HepG2 (cell line): ENCODE measurements at regions of chr11 and their contacts with region 1.

Region 1: GRCh38 chr11:10808553-10809372 is at the start of gene EIF4G2:
- DNase-seq: peak; percentile 95
- ATAC-seq: peak; percentile 97
- H3K4me3 ChIP-seq: peak within 1 kb of the TSS; percentile 88 to 99 (median 96)
- H3K27ac ChIP-seq: peak within 1 kb of the TSS; percentile 96
- H3K4me1 ChIP-seq: peaks cover 40% of the 10 kb centered on the region
- H3K27me3 ChIP-seq: no peaks in the 10 kb centered on the region; a peak in 1 of 5 replicates
- CTCF ChIP-seq: peak; percentile 18; the same call in 1 of the 2 replicates
- EP300 ChIP-seq: 0 out of 4 replicates have a peak, but pooled peaks of 1 of the 2 experiments have one; percentile 40
- POLR2A ChIP-seq: peak; percentile 100
- RAD21 ChIP-seq: no peak
- total RNA-seq, gene EIF4G2: 546 and 803 TPM in 2 replicates

Region 2: DNA sequence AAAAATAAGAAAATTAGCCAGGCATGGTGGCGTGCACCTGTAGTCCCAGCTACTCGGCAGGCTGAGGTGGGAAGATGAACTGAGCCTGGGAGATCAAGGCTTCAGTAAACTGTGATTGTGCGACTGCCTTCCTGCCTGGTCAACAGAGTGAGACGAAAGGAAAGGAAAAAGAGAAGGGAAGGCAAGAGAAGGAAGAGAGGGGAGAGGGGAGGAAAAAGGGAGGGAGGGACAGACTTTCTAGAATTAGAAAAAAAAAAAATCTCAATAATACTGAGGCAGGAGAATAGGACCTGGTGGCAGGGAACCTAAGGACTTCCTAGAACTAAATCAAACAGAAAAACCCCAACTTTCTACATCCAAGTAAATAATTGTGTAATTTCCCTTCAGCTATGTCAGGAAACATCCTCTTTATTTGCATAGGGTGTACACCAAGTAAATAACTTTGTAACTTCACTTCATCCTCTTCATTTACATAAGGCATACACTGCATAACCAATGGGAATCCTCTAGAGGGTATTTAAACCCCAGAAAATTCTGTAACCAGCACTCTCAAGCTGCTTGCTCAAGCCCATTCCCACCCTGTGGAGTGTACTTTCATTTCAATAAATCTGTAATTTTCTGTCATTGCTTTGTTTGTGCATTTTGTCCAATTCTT is 523.5 kb before region 1 on chr11:
- CTCF ChIA-PET with region 1: no interaction called
- POLR2A ChIA-PET with region 1: no interaction called
- in situ Hi-C with region 1: no loop called
- intact Hi-C with region 1: loop called (anchors 5 kb)
- DNase-seq: peak; percentile 87
- ATAC-seq: peak; percentile 30
- H3K4me3 ChIP-seq: peak overlapping the region in 1 of 3 experiments; percentile 28; a peak in 2 of 6 replicates
- H3K27ac ChIP-seq: peak overlapping the region; percentile 62
- H3K4me1 ChIP-seq: peaks cover 81% of the 10 kb centered on the region
- H3K27me3 ChIP-seq: no peaks in the 10 kb centered on the region
- CTCF ChIP-seq: no peak
- EP300 ChIP-seq: peak; percentile 51 to 79; a peak in 2 of 4 replicates
- POLR2A ChIP-seq: peak; percentile 58 to 85
- RAD21 ChIP-seq: no peak

Region 3: GRCh38 chr11:10742471-10743208 is 66.1 kb before region 1 on chr11:
- CTCF ChIA-PET with region 1: no interaction called
- POLR2A ChIA-PET with region 1: no interaction called
- in situ Hi-C with region 1: no loop called
- intact Hi-C with region 1: no loop called
- DNase-seq: no peak
- ATAC-seq: peak; percentile 47; the same call in 1 of the 3 replicates
- H3K4me3 ChIP-seq: no peak overlapping the region
- H3K27ac ChIP-seq: no peak overlapping the region
- H3K4me1 ChIP-seq: peaks cover 16% of the 10 kb centered on the region
- H3K27me3 ChIP-seq: peaks cover 2 to 8% of the 10 kb centered on the region in 2 experiments; a peak in 2 of 5 replicates
- CTCF ChIP-seq: no peak
- EP300 ChIP-seq: no peak
- POLR2A ChIP-seq: no peak
- RAD21 ChIP-seq: no peak

Region 4: GRCh38 chr11:10770626-10771254 is 38.0 kb before region 1 on chr11:
- CTCF ChIA-PET with region 1: no interaction called
- POLR2A ChIA-PET with region 1: interaction called, 26 read pairs
- in situ Hi-C with region 1: no loop called
- intact Hi-C with region 1: no loop called
- DNase-seq: peak; percentile 33
- ATAC-seq: peak; percentile 77
- H3K4me3 ChIP-seq: no peak overlapping the region
- H3K27ac ChIP-seq: no peak overlapping the region
- H3K4me1 ChIP-seq: no peaks in the 10 kb centered on the region
- H3K27me3 ChIP-seq: no peaks in the 10 kb centered on the region
- CTCF ChIP-seq: peak; percentile 72
- EP300 ChIP-seq: no peak
- POLR2A ChIP-seq: no peak
- RAD21 ChIP-seq: no peak

Region 5: DNA sequence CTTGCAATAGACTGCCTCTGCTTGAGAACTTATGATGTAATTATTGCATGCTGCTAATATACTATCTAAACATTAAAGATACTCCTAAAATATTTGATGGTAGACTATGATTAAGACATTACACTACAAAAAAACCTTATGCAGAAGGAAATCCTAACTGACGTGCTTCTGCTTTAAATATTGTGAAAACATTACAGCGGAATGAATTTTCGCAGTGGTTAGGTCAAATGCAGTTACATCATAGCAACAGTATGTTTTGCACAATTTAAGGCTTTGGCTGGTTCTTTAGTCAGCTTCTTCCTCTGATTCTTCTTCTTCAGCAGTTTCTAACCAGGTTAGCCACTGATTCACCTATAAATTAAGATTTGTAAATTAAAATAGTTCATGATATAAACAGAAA is 11.2 kb before region 1 on chr11:
- CTCF ChIA-PET with region 1: no interaction called
- POLR2A ChIA-PET with region 1: interaction called, 104 read pairs
- in situ Hi-C with region 1: no loop called
- intact Hi-C with region 1: no loop called
- DNase-seq: no peak
- ATAC-seq: no peak
- H3K4me3 ChIP-seq: no peak overlapping the region
- H3K27ac ChIP-seq: no peak overlapping the region
- H3K4me1 ChIP-seq: peaks cover 5% of the 10 kb centered on the region; the same call in 1 of the 2 replicates
- H3K27me3 ChIP-seq: no peaks in the 10 kb centered on the region
- CTCF ChIP-seq: no peak
- EP300 ChIP-seq: no peak
- POLR2A ChIP-seq: no peak
- RAD21 ChIP-seq: no peak

Region 6: DNA sequence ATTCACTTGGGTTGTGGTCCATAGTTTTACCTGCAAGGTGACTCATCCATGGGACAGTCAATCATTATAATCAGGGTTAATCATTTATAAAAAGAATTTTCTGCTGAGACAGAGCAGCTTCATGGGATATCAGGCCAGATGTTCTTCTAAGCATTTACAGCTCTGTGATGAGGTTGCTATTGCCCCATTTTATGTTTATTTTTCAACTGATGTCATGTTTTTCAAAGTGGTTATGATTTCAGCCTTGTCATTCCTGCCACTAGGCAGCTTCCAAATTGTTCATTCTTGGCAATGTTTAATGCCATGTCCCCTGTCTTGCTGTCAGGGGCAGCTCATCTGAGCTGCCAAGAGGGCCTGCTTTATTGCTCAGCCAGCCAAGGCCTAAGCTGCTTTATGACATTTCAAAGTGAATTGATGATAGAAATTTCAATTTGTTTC is 85.0 kb after region 1 on chr11:
- CTCF ChIA-PET with region 1: no interaction called
- POLR2A ChIA-PET with region 1: interaction called, 29 read pairs
- in situ Hi-C with region 1: no loop called
- intact Hi-C with region 1: no loop called
- DNase-seq: peak; percentile 50
- ATAC-seq: no peak
- H3K4me3 ChIP-seq: no peak overlapping the region
- H3K27ac ChIP-seq: no peak overlapping the region
- H3K4me1 ChIP-seq: peaks cover under 1% of the 10 kb centered on the region; the same call in 1 of the 2 replicates
- H3K27me3 ChIP-seq: no peaks in the 10 kb centered on the region
- CTCF ChIP-seq: no peak
- EP300 ChIP-seq: no peak
- POLR2A ChIP-seq: no peak
- RAD21 ChIP-seq: no peak

Region 7: GRCh38 chr11:11841723-11842420 is 1033.1 kb after region 1 on chr11 and contains the start of gene USP47:
- CTCF ChIA-PET with region 1: no interaction called
- POLR2A ChIA-PET with region 1: interaction called, 12 read pairs
- in situ Hi-C with region 1: no loop called
- intact Hi-C with region 1: no loop called
- DNase-seq: peak; percentile 74
- ATAC-seq: peak; percentile 89
- H3K4me3 ChIP-seq: peak within 1 kb of the TSS; percentile 74 to 98 (median 86)
- H3K27ac ChIP-seq: peak within 1 kb of the TSS; percentile 98
- H3K4me1 ChIP-seq: peaks cover 33% of the 10 kb centered on the region
- H3K27me3 ChIP-seq: no peaks in the 10 kb centered on the region
- CTCF ChIP-seq: peak; percentile 60
- EP300 ChIP-seq: no peak; a peak in 1 of 4 replicates
- POLR2A ChIP-seq: peak; percentile 88 to 89
- RAD21 ChIP-seq: peak; percentile 53
- total RNA-seq, gene USP47: 52.7 and 64.6 TPM in 2 replicates